ENCODE measurements at regions of chr20 and their contacts with region 1.

Region 1: DNA sequence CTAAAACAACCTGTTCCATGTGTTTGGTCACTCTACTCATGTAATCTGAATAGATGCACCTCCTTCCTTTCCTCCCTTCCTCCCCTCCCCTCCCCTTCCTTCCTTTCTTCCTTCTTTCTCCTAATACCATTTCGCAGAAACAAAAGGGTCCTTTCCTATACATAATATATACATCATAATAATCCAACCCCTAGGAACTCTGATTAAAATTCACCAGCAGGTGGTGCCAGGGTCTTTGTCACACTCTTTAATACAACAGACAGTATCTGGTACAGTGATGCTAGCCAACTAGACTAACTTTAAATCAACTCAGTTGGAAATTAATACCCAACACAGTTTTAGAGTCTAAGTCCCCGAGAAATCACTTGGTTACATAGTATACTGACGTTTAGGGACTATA is 181.2 kb upstream of the SHLD1 start:
- DNase-seq: peak; percentile 84
- ATAC-seq: peak; percentile 96
- H3K4me3 ChIP-seq: no peak overlapping the region
- H3K27ac ChIP-seq: no peak overlapping the region
- H3K4me1 ChIP-seq: no peaks in the 10 kb centered on the region
- H3K27me3 ChIP-seq: no peaks in the 10 kb centered on the region
- CTCF ChIP-seq: peak; percentile 78

Region 2: GRCh38 chr20:5608442-5609161 is 39.6 kb after region 1 on chr20:
- CTCF ChIA-PET with region 1: no interaction called
- POLR2A ChIA-PET with region 1: no interaction called
- intact Hi-C with region 1: loop called (anchors 5 kb)
- DNase-seq: peak; percentile 63
- ATAC-seq: 0 out of 2 replicates have a peak, but pooled peaks have one; percentile 6
- H3K4me3 ChIP-seq: peak overlapping the region; percentile 77
- H3K27ac ChIP-seq: peak overlapping the region; percentile 71
- H3K4me1 ChIP-seq: peaks cover 40% of the 10 kb centered on the region
- H3K27me3 ChIP-seq: no peaks in the 10 kb centered on the region
- CTCF ChIP-seq: no peak

Region 3: GRCh38 chr20:5933802-5934436 is 364.9 kb after region 1 on chr20:
- CTCF ChIA-PET with region 1: no interaction called
- POLR2A ChIA-PET with region 1: interaction called, 4 read pairs
- intact Hi-C with region 1: loop called (anchors 5 kb)
- DNase-seq: peak; percentile 62
- ATAC-seq: peak; percentile 86
- H3K4me3 ChIP-seq: no peak overlapping the region
- H3K27ac ChIP-seq: no peak overlapping the region
- H3K4me1 ChIP-seq: no peaks in the 10 kb centered on the region
- H3K27me3 ChIP-seq: 0 out of 2 replicates have a peak, but pooled peaks cover 4% of the 10 kb centered on the region
- CTCF ChIP-seq: peak; percentile 78

Region 4: DNA sequence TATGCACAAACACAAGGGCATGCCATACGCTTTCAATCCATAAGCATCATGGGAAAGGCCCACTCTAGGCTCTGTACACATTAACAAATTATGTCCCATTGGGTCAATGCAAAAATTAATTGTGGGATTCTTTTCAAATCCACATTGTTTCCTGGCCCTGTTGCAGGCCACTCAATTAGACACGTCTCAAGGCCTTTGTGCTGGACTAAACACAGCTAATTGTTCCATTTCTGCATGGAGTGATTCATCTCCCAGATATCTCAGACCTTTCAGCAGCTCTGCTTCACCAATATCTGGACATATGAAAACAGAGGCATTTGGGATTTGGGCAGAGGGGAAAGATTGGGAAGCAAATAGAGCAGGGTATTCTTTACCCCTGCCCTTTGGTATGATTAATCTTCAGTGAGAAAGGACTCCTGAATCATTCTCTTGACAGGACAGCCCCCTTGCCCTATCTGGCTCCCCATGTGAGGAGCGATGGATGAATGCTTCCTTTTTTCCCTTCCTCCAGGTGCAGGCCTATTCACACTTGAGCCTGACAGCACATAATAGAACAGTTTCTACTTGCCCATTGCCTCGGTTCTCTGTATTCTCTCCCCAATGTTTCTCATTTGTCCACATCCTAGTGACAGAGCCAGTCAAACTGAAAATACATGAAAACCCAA is 1823.7 kb after region 1 on chr20:
- CTCF ChIA-PET with region 1: no interaction called
- POLR2A ChIA-PET with region 1: interaction called, 12 read pairs
- intact Hi-C with region 1: no loop called
- DNase-seq: no peak
- ATAC-seq: no peak
- H3K4me3 ChIP-seq: no peak overlapping the region
- H3K27ac ChIP-seq: no peak overlapping the region
- H3K4me1 ChIP-seq: no peaks in the 10 kb centered on the region
- H3K27me3 ChIP-seq: no peaks in the 10 kb centered on the region
- CTCF ChIP-seq: no peak